Psoas muscle (tissue), 8 donors: ENCODE measurements at regions of chr11 and their contacts with region 1.

Region 1: GRCh38 chr11:43399983-43400630 is 41.4 kb downstream of the TTC17 start:
- DNase-seq: no peak
- ATAC-seq: no peak
- H3K4me3 ChIP-seq: no peak overlapping the region
- H3K27ac ChIP-seq: no peak overlapping the region
- H3K4me1 ChIP-seq: no peaks in the 10 kb centered on the region
- H3K27me3 ChIP-seq: no peaks in the 10 kb centered on the region
- CTCF ChIP-seq: no peak

Region 2: GRCh38 chr11:43282607-43283440 is 117.3 kb before region 1 on chr11:
- intact Hi-C with region 1: no loop called
- DNase-seq: peak in 1 of 2 donors; percentile 62
- ATAC-seq: peak in 1 of 4 donors; percentile 61
- H3K4me3 ChIP-seq: no peak overlapping the region
- H3K27ac ChIP-seq: no peak overlapping the region
- H3K4me1 ChIP-seq: no peaks in the 10 kb centered on the region
- H3K27me3 ChIP-seq: peaks cover 0 to 13% (median 0%) of the 10 kb centered on the region in 3 donors
- CTCF ChIP-seq: peak; percentile 80

Region 3: GRCh38 chr11:43327987-43328386 is 72.1 kb before region 1 on chr11:
- intact Hi-C with region 1: loop called (anchors 5 kb)
- DNase-seq: no peak
- ATAC-seq: no peak
- H3K4me3 ChIP-seq: no peak overlapping the region
- H3K27ac ChIP-seq: no peak overlapping the region
- H3K4me1 ChIP-seq: no peaks in the 10 kb centered on the region
- H3K27me3 ChIP-seq: no peaks in the 10 kb centered on the region
- CTCF ChIP-seq: no peak

Region 4: GRCh38 chr11:43341159-43341558 is 58.9 kb before region 1 on chr11:
- intact Hi-C with region 1: loop called in 1 of 2 experiments (anchors 5 kb)
- DNase-seq: no peak
- ATAC-seq: no peak
- H3K4me3 ChIP-seq: no peak overlapping the region
- H3K27ac ChIP-seq: no peak overlapping the region
- H3K4me1 ChIP-seq: no peaks in the 10 kb centered on the region
- H3K27me3 ChIP-seq: no peaks in the 10 kb centered on the region
- CTCF ChIP-seq: no peak

Region 5: GRCh38 chr11:43447151-43447550 is 47.0 kb after region 1 on chr11:
- intact Hi-C with region 1: loop called in 1 of 2 experiments (anchors 5 kb)
- DNase-seq: no peak
- ATAC-seq: no peak
- H3K4me3 ChIP-seq: no peak overlapping the region
- H3K27ac ChIP-seq: no peak overlapping the region
- H3K4me1 ChIP-seq: no peaks in the 10 kb centered on the region
- H3K27me3 ChIP-seq: no peaks in the 10 kb centered on the region
- CTCF ChIP-seq: no peak